Ascending aorta (tissue), 2 donors: ENCODE measurements at regions of chr5 and their contacts with region 1.

Region 1: GRCh38 chr5:112848116-112848811 is 12.8 kb upstream of the SRP19 start:
- DNase-seq: no peak
- H3K4me3 ChIP-seq: no peak overlapping the region
- H3K27ac ChIP-seq: no peak overlapping the region
- H3K4me1 ChIP-seq: no peaks in the 10 kb centered on the region
- H3K27me3 ChIP-seq: no peaks in the 10 kb centered on the region
- CTCF ChIP-seq: peak; percentile 35 to 60 (median 40)

Region 2: DNA sequence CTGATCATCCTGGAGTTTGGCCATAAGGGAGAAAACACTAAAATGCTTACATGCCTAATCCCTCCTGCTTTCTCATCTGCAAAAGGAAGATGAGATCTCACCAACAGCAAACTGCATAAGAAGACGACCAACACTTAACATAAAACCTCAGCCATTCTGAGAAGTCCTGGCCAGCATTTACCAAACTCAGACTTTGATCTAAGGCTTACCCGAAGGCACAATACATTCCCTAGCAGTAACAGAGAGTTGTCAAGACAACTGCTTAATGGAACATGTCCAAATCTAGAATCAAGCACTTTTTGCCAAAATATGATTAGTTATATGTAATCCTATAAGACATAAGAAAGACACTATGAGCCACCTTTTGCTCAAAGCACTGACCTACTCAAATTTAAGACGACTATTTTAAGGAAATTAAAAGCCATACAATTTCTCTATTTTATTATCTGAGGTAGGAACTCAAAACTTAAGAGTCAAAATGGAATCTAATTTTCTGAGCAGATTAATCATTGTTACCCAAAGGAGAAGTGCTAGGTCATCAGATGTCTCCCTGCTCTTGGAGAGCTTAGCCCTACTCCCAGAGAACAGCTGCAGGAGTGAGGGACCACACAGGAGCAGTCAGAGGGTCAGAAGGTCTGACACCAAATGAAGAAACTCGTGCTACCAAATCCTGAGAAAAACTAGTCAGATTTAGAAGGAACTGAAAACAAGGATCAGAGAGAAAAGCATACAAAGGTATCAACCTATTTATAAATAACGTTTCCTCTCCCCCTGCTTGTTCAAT is 468.5 kb before region 1 on chr5:
- intact Hi-C with region 1: no loop called
- DNase-seq: no peak
- H3K4me3 ChIP-seq: no peak overlapping the region
- H3K27ac ChIP-seq: no peak overlapping the region
- H3K4me1 ChIP-seq: no peaks in the 10 kb centered on the region
- H3K27me3 ChIP-seq: no peaks in the 10 kb centered on the region
- CTCF ChIP-seq: no peak

Region 3: GRCh38 chr5:112551419-112552032 is 296.7 kb before region 1 on chr5:
- intact Hi-C with region 1: loop called (anchors 5 kb)
- DNase-seq: no peak
- H3K4me3 ChIP-seq: no peak overlapping the region
- H3K27ac ChIP-seq: no peak overlapping the region
- H3K4me1 ChIP-seq: peaks cover 0 to 10% of the 10 kb centered on the region in 2 donors
- H3K27me3 ChIP-seq: no peaks in the 10 kb centered on the region
- CTCF ChIP-seq: peak; percentile 62 to 86 (median 63)